Left cardiac atrium (tissue), 4 donors: ENCODE measurements at regions of chr10 and their contacts with region 1.

Region 1: GRCh38 chr10:93288654-93289634 is 193.2 kb downstream of the MYOF start:
- DNase-seq: peak; percentile 70
- ATAC-seq: peak; percentile 61 to 74

Region 2: GRCh38 chr10:93080350-93081046 is 208.4 kb before region 1 on chr10:
- intact Hi-C with region 1: loop called in 1 of 2 experiments (anchors 10 kb)
- DNase-seq: no peak
- ATAC-seq: peak; percentile 67 to 74

Region 3: GRCh38 chr10:93095225-93095624 is 193.7 kb before region 1 on chr10:
- intact Hi-C with region 1: no loop called
- DNase-seq: no peak
- ATAC-seq: no peak

Region 4: GRCh38 chr10:93115661-93116383 is 173.1 kb before region 1 on chr10:
- intact Hi-C with region 1: loop called (anchors 1 to 5 kb)
- DNase-seq: peak; percentile 72
- ATAC-seq: peak; percentile 41 to 53